Common myeloid progenitor, CD34-positive (primary cell): ENCODE measurements at regions of chr10 and their contacts with region 1.

Region 1: DNA sequence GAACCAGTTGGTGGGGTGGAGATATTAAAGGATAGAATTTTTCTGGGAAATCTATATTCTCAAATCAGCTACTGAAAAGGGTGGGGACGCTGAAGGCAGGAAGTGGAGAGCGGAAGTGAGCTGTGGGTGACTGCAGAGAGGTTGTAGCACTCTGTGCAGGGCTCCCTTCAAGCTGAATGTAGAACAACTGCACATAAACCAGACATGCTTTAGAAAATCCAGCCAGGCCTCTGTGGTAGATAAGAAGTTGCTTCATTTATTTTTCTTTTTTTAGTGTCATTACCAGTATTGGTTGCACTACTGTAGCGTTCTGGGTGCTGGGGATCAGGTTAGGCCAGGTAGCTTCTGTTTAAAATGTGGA is 127.8 kb downstream of the CELF2 start:
- DNase-seq: peak in 2 of 3 donors; percentile 78 to 87
- H3K4me3 ChIP-seq: peak overlapping the region in 6 of 7 experiments; percentile 9 to 50 (median 24)
- H3K27ac ChIP-seq: peak overlapping the region; percentile 42 to 71
- H3K4me1 ChIP-seq: peaks cover 63 to 100% (median 90%) of the 10 kb centered on the region in 4 experiments
- H3K27me3 ChIP-seq: no peaks in the 10 kb centered on the region

Region 2: GRCh38 chr10:11165591-11166543 is 20.4 kb after region 1 on chr10:
- CTCF ChIA-PET with region 1: interaction called, 78 read pairs
- POLR2A ChIA-PET with region 1: interaction called, 64 read pairs
- DNase-seq: peak; percentile 82 to 93 (median 89)
- H3K4me3 ChIP-seq: peak overlapping the region; percentile 88 to 99 (median 97)
- H3K27ac ChIP-seq: peak overlapping the region; percentile 85 to 95
- H3K4me1 ChIP-seq: peaks cover 66 to 80% (median 73%) of the 10 kb centered on the region in 4 experiments
- H3K27me3 ChIP-seq: no peaks in the 10 kb centered on the region

Region 3: DNA sequence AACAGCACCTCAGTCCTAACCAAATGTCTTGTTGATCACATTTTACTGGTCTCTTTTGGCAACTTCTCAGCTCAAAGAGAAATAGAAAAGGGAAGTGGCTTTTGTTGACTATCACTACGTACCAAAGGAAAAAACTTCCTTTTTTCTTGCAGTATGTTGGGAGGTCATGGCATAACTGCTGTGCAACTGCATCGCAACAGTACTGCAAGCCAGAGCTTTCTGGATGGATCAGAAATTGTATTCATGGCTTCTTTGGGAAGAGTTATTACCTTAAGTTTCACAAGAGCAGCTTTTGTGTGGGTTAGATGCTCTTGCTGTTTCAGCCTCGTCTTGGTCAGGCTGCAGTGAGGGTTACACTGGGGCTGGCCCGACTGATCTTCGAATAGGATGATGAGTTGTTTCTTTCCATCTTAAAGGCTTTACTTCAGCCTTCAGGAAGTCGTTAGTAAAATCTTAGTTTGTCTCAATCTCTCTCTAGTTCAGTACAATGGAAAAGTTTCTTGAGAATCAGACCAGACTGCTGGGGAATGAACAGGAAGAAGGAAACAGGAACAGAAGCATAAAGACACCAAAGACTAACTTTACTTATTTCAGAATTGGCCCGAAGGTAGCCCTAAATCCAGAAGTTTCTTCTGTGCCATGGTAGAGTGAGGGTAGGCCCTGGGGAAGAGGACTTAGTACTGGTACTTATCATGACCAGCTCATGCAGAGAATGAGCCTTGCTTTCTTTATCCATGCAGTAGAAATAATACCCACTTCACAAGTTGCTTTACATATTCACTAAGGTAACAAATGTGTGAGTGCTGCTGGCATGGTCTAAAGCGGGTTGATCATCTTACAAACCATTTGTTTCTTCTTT is 25.7 kb after region 1 on chr10:
- CTCF ChIA-PET with region 1: interaction called, 78 read pairs
- POLR2A ChIA-PET with region 1: interaction called, 64 read pairs
- DNase-seq: peak; percentile 67 to 85 (median 82)
- H3K4me3 ChIP-seq: peak overlapping the region in 6 of 7 experiments; percentile 88 to 99 (median 98)
- H3K27ac ChIP-seq: peak overlapping the region; percentile 85 to 95
- H3K4me1 ChIP-seq: peaks cover 85 to 94% (median 92%) of the 10 kb centered on the region in 4 experiments
- H3K27me3 ChIP-seq: no peaks in the 10 kb centered on the region

Region 4: GRCh38 chr10:11178606-11179515 is 33.4 kb after region 1 on chr10:
- CTCF ChIA-PET with region 1: interaction called, 15 read pairs
- POLR2A ChIA-PET with region 1: interaction called, 10 read pairs
- DNase-seq: peak; percentile 96 to 99 (median 98)
- H3K4me3 ChIP-seq: peak overlapping the region in 3 of 7 experiments; percentile 30 to 32 (median 31)
- H3K27ac ChIP-seq: peak overlapping the region; percentile 72 to 95
- H3K4me1 ChIP-seq: peaks cover 57 to 96% (median 82%) of the 10 kb centered on the region in 4 experiments
- H3K27me3 ChIP-seq: no peaks in the 10 kb centered on the region

Region 5: GRCh38 chr10:11472158-11472753 is 326.8 kb after region 1 on chr10:
- CTCF ChIA-PET with region 1: no interaction called
- POLR2A ChIA-PET with region 1: no interaction called
- DNase-seq: peak; percentile 62 to 80 (median 74)
- H3K4me3 ChIP-seq: no peak overlapping the region
- H3K27ac ChIP-seq: no peak overlapping the region
- H3K4me1 ChIP-seq: peaks cover 0 to 3% (median under 1%) of the 10 kb centered on the region in 4 experiments
- H3K27me3 ChIP-seq: no peaks in the 10 kb centered on the region